Heart right ventricle (tissue), 16 donors: ENCODE measurements at regions of chr3 and their contacts with region 1.

Region 1: GRCh38 chr3:132486086-132486485 is 68.8 kb downstream of the DNAJC13 start:
- DNase-seq: no peak
- ATAC-seq: no peak
- H3K4me3 ChIP-seq: no peak overlapping the region
- H3K27ac ChIP-seq: no peak overlapping the region
- H3K4me1 ChIP-seq: no peaks in the 10 kb centered on the region
- H3K27me3 ChIP-seq: no peaks in the 10 kb centered on the region
- CTCF ChIP-seq: no peak

Region 2: DNA sequence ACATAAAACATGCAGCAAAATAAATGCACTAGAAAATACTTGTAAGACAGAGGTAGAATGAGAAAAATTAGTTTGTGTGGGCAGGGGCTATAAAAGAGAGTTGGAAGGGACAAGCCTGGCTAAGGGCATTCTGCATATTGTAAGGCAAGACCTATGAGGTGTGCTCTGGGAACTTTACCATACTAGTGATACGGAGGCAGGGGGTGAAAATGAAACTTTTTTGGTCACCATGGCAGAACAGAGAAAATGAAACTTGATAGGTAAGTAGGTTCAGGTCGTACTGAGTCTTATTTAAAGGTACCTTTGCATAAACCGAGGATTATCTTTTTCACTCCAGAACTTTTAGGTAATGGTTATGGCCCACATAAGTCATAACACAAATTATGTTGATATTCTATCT is 36.3 kb after region 1 on chr3:
- intact Hi-C with region 1: loop called in 1 of 10 experiments (anchors 5 kb)
- DNase-seq: no peak
- ATAC-seq: no peak
- H3K4me3 ChIP-seq: no peak overlapping the region
- H3K27ac ChIP-seq: no peak overlapping the region
- H3K4me1 ChIP-seq: no peaks in the 10 kb centered on the region
- H3K27me3 ChIP-seq: no peaks in the 10 kb centered on the region
- CTCF ChIP-seq: no peak